Activated CD8-positive, alpha-beta T cell treated with anti-CD3 and anti-CD28 coated beads, Interleukin-2, amount 10 ng/mL, durations not matched to agents 7 days and 5 days (primary cell): ENCODE measurements at regions of chr5 and their contacts with region 1.

Region 1: GRCh38 chr5:135426102-135427082 is 20.8 kb downstream of the DCANP1 start:
- DNase-seq: peak; percentile 69
- ATAC-seq: peak; percentile 98
- H3K4me3 Mint-ChIP-seq: peak overlapping the region; percentile 9
- H3K27ac Mint-ChIP-seq: peak overlapping the region; percentile 84
- H3K4me1 Mint-ChIP-seq: peaks cover 19% of the 10 kb centered on the region
- H3K27me3 Mint-ChIP-seq: peaks cover 20% of the 10 kb centered on the region

Region 2: GRCh38 chr5:135287551-135287950 is 138.8 kb before region 1 on chr5:
- CTCF ChIA-PET with region 1: no interaction called
- POLR2A ChIA-PET with region 1: no interaction called
- DNase-seq: no peak
- ATAC-seq: no peak
- H3K4me3 Mint-ChIP-seq: no peak overlapping the region
- H3K27ac Mint-ChIP-seq: no peak overlapping the region
- H3K4me1 Mint-ChIP-seq: no peaks in the 10 kb centered on the region
- H3K27me3 Mint-ChIP-seq: peaks cover 75% of the 10 kb centered on the region

Region 3: GRCh38 chr5:135359374-135360165 is 66.8 kb before region 1 on chr5:
- CTCF ChIA-PET with region 1: interaction called, 10 read pairs
- POLR2A ChIA-PET with region 1: no interaction called
- DNase-seq: no peak
- ATAC-seq: no peak
- H3K4me3 Mint-ChIP-seq: no peak overlapping the region
- H3K27ac Mint-ChIP-seq: peak overlapping the region; percentile 76
- H3K4me1 Mint-ChIP-seq: peaks cover 35% of the 10 kb centered on the region
- H3K27me3 Mint-ChIP-seq: no peaks in the 10 kb centered on the region

Region 4: DNA sequence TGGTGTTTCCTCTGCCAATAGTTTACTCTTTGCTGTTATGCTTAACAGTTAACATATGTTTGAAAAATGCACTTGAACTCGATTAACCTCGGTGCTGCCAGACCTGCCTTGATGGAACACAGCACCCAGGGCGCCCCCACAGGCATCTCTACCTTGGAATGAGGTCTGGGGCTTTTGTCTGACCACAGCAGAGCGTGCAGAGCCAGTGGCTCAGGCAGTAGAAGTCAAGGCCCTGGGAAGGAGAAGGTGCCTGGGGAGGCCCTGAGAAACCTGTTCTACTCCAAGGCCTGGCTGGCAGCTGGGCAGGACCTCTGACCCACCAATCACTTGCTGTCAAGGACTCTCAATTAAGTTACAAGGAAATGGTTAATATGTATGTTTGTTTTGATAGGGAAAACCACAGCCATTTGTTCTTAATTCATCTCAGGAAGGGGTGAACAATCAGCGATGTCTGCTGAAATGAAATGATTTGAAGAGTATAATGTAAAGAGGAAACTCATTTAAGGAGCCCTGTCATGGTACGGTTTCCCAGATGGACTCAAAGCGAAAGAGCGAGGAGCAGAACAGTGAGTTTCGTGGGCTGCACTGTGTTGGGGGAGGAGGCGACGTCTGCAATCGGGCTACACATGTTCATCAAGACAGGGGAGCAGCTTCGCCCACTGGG is 49.3 kb before region 1 on chr5:
- CTCF ChIA-PET with region 1: interaction called, 13 read pairs
- POLR2A ChIA-PET with region 1: no interaction called
- DNase-seq: no peak
- ATAC-seq: no peak
- H3K4me3 Mint-ChIP-seq: no peak overlapping the region
- H3K27ac Mint-ChIP-seq: peak overlapping the region; percentile 55
- H3K4me1 Mint-ChIP-seq: peaks cover 88% of the 10 kb centered on the region
- H3K27me3 Mint-ChIP-seq: no peaks in the 10 kb centered on the region

Region 5: GRCh38 chr5:135405082-135405481 is 21.3 kb before region 1 on chr5:
- CTCF ChIA-PET with region 1: interaction called, 12 read pairs
- POLR2A ChIA-PET with region 1: no interaction called
- DNase-seq: no peak
- ATAC-seq: no peak
- H3K4me3 Mint-ChIP-seq: no peak overlapping the region
- H3K27ac Mint-ChIP-seq: no peak overlapping the region
- H3K4me1 Mint-ChIP-seq: peaks cover 2% of the 10 kb centered on the region
- H3K27me3 Mint-ChIP-seq: peaks cover 30% of the 10 kb centered on the region

Region 6: DNA sequence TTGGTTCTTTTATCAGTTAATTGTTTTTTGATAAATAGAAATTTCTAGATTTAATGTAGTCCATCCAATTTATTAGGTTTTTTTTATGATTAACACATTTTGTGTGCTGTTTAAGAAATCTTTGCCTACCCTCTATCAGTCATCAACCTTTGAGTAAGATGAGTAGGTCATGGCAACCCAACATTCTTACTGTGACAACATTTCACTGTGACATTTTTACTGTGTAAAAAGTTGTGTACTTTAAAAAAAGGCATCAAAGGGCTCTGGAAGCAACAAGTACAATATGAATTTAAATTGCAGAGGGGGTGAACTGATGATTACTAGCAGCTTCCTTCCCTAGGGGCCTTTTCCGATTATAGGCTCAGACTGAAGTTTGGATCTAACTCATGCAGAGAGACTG is 16.0 kb before region 1 on chr5:
- CTCF ChIA-PET with region 1: interaction called, 12 read pairs
- POLR2A ChIA-PET with region 1: no interaction called
- DNase-seq: no peak
- ATAC-seq: no peak
- H3K4me3 Mint-ChIP-seq: no peak overlapping the region
- H3K27ac Mint-ChIP-seq: no peak overlapping the region
- H3K4me1 Mint-ChIP-seq: no peaks in the 10 kb centered on the region
- H3K27me3 Mint-ChIP-seq: peaks cover 30% of the 10 kb centered on the region

Region 7: GRCh38 chr5:135457424-135458071 is 31.2 kb after region 1 on chr5:
- CTCF ChIA-PET with region 1: interaction called, 21 read pairs
- POLR2A ChIA-PET with region 1: no interaction called
- DNase-seq: peak; percentile 77
- ATAC-seq: peak; percentile 75
- H3K4me3 Mint-ChIP-seq: no peak overlapping the region
- H3K27ac Mint-ChIP-seq: no peak overlapping the region
- H3K4me1 Mint-ChIP-seq: no peaks in the 10 kb centered on the region
- H3K27me3 Mint-ChIP-seq: peaks cover 24% of the 10 kb centered on the region

Region 8: DNA sequence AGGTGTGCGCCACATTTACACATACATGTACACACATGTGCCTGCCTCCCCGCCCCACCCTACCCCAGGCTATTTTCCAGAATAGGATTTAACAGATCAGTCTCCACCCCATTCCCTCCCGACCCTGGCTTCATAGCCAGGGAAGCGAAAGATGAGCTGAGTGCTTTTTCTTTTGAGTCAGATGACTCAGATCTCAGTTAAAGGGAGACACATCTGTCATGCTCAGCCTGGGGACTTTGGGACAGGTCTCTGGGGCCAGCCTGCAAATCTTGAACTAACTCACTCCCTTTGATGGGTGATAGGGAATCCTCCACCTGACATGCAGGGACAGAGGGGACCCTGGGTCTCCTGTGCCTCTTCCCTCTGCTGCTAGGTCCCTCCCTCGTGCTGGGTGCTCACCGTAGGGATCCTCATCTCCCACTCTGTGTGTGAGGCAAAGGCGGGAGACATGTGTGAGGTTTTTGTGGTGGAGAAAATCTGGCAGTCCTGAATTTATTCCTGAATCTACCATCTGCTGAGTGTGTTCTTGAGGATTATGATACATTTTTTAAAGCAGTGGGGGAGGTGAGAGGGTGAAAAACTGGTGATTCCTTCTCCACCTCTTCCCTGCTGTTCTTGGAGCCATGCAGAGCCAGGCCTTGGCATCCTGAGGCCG is 71.7 kb after region 1 on chr5:
- CTCF ChIA-PET with region 1: no interaction called
- POLR2A ChIA-PET with region 1: no interaction called
- DNase-seq: no peak
- ATAC-seq: no peak
- H3K4me3 Mint-ChIP-seq: no peak overlapping the region
- H3K27ac Mint-ChIP-seq: no peak overlapping the region
- H3K4me1 Mint-ChIP-seq: no peaks in the 10 kb centered on the region
- H3K27me3 Mint-ChIP-seq: peaks cover 29% of the 10 kb centered on the region

Region 9: GRCh38 chr5:135565725-135566421 is 139.5 kb after region 1 on chr5:
- CTCF ChIA-PET with region 1: interaction called, 11 read pairs
- POLR2A ChIA-PET with region 1: no interaction called
- DNase-seq: peak; percentile 76
- ATAC-seq: peak; percentile 85
- H3K4me3 Mint-ChIP-seq: no peak overlapping the region
- H3K27ac Mint-ChIP-seq: no peak overlapping the region
- H3K4me1 Mint-ChIP-seq: peaks cover 3% of the 10 kb centered on the region
- H3K27me3 Mint-ChIP-seq: peaks cover 9% of the 10 kb centered on the region

Region 10: DNA sequence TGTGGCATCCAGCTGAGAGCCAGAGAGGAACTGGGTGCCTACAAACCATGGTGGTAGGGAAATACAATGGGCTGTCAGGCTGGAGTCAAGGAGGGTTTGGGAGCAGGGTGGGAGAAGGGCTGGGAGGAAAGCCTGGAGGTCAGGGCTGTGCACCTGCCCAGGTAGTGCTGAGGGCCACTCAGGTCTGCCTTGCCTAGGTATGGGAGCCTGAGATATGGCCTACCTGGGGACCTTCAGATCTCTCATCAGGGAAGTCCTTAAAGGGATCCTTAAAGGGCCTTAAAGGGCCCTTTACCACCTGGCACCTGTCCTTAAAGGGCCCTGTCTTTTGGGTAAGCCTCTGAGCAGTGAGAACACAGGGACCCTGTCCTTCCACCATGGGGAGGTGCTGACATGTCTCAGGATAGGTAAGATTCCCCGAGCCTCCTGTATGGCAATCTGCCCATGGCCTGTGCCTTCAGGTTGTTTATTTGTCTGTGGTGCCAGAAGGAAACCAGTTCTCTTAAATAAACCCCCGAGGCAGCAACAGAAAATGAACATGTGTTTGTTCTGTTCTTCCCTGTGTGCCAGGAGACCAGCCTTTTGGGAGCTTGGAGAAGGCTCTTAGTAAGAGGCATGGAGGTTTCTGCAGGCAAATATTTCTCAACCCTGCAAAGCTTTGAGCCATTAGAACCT is 431.4 kb after region 1 on chr5:
- CTCF ChIA-PET with region 1: no interaction called
- POLR2A ChIA-PET with region 1: no interaction called
- DNase-seq: no peak
- ATAC-seq: no peak
- H3K4me3 Mint-ChIP-seq: no peak overlapping the region
- H3K27ac Mint-ChIP-seq: no peak overlapping the region
- H3K4me1 Mint-ChIP-seq: no peaks in the 10 kb centered on the region
- H3K27me3 Mint-ChIP-seq: no peaks in the 10 kb centered on the region

Region 11: DNA sequence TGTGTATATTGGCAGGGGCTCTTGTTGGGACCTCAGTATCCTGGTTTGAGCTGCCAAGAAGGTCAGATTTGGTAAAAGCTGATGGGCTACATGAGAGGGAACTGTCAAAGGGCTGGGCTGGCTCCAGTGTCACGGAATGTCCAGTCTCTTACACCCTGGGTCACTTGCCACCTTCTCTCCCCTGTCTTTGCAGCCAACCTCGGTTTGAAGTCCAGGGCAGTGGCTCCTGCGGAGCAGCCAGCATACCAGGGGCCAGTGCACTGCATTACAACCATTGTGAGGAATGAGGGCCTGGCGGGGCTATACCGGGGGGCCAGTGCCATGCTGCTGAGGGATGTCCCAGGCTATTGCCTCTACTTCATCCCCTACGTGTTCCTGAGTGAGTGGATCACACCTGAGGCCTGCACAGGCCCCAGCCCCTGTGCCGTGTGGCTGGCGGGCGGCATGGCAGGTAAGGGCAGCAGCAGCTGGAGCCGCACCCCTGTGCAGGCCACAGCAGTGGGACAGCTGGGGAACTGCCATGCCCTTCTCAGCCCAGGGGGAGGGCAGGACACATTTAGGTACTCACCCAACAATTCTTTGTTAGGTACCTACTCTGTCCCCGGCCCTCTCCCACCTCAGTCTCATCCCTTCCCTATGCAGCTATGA is 445.0 kb after region 1 on chr5:
- CTCF ChIA-PET with region 1: no interaction called
- POLR2A ChIA-PET with region 1: no interaction called
- DNase-seq: no peak
- ATAC-seq: no peak
- H3K4me3 Mint-ChIP-seq: no peak overlapping the region
- H3K27ac Mint-ChIP-seq: no peak overlapping the region
- H3K4me1 Mint-ChIP-seq: no peaks in the 10 kb centered on the region
- H3K27me3 Mint-ChIP-seq: no peaks in the 10 kb centered on the region